ENCODE measurements at regions of chr4 and their contacts with region 1.

Region 1: GRCh38 chr4:93827272-93827947 is 1.1 kb upstream of the ATOH1 start:
- DNase-seq: no peak
- H3K4me3 ChIP-seq: no peak overlapping the region
- H3K27ac ChIP-seq: no peak overlapping the region
- H3K4me1 ChIP-seq: peaks cover 15% of the 10 kb centered on the region
- H3K27me3 ChIP-seq: peaks cover 52% of the 10 kb centered on the region
- CTCF ChIP-seq: no peak

Region 2: DNA sequence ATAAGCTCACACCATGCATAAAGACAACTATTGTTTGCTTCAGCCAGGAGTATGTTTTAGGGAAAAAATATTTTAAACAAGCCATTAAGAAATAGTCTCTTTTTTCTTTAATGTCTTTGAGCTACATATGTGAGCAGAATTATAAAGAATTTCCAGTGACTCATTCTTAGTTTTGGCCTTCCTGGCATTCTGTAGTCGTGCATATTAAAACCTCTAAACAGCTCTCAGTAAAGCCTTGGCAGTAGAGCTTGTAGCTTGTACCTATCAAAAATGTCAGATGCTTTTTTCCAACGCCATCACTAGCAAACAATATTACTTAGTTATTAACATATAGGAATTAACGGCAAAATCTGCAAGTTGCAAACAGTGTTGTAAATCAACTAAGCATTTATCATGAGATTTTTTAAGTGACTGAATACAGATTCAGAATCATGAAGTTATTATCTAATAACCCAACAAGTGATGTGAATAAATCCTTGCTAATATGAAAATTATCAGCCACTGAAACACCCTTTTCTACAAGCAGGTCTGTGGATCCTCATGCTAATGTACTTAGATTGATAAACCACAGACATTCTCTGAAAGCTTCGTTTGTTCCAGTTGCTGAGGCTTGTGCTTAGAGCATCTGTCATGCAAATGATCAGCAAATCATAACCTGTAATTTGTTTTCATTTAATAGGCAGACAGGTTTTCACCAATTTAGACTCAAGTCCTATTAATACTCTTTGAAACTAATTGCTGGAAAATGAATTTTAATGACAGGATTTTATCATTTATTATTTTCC is 410.9 kb before region 1 on chr4:
- CTCF ChIA-PET with region 1: no interaction called
- dilution Hi-C with region 1: no loop called
- in situ Hi-C with region 1: no loop called
- intact Hi-C with region 1: no loop called
- DNase-seq: no peak
- H3K4me3 ChIP-seq: no peak overlapping the region
- H3K27ac ChIP-seq: no peak overlapping the region
- H3K4me1 ChIP-seq: no peaks in the 10 kb centered on the region
- H3K27me3 ChIP-seq: no peaks in the 10 kb centered on the region
- CTCF ChIP-seq: no peak

Region 3: GRCh38 chr4:93802085-93802484 is 25.3 kb before region 1 on chr4:
- CTCF ChIA-PET with region 1: no interaction called
- dilution Hi-C with region 1: no loop called
- in situ Hi-C with region 1: no loop called
- intact Hi-C with region 1: loop called (anchors 1 kb)
- DNase-seq: no peak
- H3K4me3 ChIP-seq: no peak overlapping the region
- H3K27ac ChIP-seq: no peak overlapping the region
- H3K4me1 ChIP-seq: no peaks in the 10 kb centered on the region
- H3K27me3 ChIP-seq: no peaks in the 10 kb centered on the region
- CTCF ChIP-seq: no peak

Region 4: DNA sequence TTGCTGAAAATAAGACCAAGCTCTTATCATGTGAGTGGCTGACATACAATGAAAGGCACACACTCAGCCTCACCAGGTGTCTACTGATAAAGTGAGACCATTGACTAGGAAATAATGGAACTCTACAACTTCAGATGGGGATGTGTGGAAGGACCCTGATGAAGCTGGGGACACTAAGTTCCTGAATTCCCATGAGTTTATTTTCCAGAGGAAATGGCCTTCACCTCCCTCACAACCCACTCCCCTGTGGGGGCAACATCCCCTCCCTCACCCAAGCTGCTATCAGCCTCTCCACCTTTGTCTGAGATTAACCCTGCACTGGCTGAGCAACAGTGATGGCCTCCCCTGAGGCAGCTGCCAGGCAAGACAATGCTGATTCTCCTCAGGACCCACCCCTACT is 325.1 kb after region 1 on chr4:
- CTCF ChIA-PET with region 1: no interaction called
- dilution Hi-C with region 1: no loop called
- in situ Hi-C with region 1: no loop called
- intact Hi-C with region 1: no loop called
- DNase-seq: no peak
- H3K4me3 ChIP-seq: no peak overlapping the region
- H3K27ac ChIP-seq: no peak overlapping the region
- H3K4me1 ChIP-seq: no peaks in the 10 kb centered on the region
- H3K27me3 ChIP-seq: peaks cover 2% of the 10 kb centered on the region
- CTCF ChIP-seq: no peak

Measured in mammary epithelial cell (primary cell).